Activated CD4-positive, alpha-beta T cell treated with anti-CD3 and anti-CD28 coated beads, Interleukin-2, amount 10 ng/mL, durations not matched to agents 24 days and 14 days (primary cell): ENCODE measurements at regions of chr14 and their contacts with region 1.

Region 1: GRCh38 chr14:65462411-65462810 is 49.9 kb downstream of the FUT8 start:
- DNase-seq: no peak
- H3K4me3 Mint-ChIP-seq: peak overlapping the region; percentile 12
- H3K27ac Mint-ChIP-seq: peak overlapping the region; percentile 68
- H3K4me1 Mint-ChIP-seq: peaks cover 38% of the 10 kb centered on the region
- H3K27me3 Mint-ChIP-seq: no peaks in the 10 kb centered on the region

Region 2: GRCh38 chr14:65444230-65444629 is 18.2 kb before region 1 on chr14:
- intact Hi-C with region 1: loop called (anchors 1 kb)
- DNase-seq: no peak
- H3K4me3 Mint-ChIP-seq: no peak overlapping the region
- H3K27ac Mint-ChIP-seq: peak overlapping the region; percentile 44
- H3K4me1 Mint-ChIP-seq: peaks cover 33% of the 10 kb centered on the region
- H3K27me3 Mint-ChIP-seq: no peaks in the 10 kb centered on the region

Region 3: GRCh38 chr14:65478596-65478995 is 16.2 kb after region 1 on chr14:
- intact Hi-C with region 1: loop called (anchors 2 kb)
- DNase-seq: no peak
- H3K4me3 Mint-ChIP-seq: no peak overlapping the region
- H3K27ac Mint-ChIP-seq: peak overlapping the region; percentile 13
- H3K4me1 Mint-ChIP-seq: peaks cover 53% of the 10 kb centered on the region
- H3K27me3 Mint-ChIP-seq: no peaks in the 10 kb centered on the region

Region 4: DNA sequence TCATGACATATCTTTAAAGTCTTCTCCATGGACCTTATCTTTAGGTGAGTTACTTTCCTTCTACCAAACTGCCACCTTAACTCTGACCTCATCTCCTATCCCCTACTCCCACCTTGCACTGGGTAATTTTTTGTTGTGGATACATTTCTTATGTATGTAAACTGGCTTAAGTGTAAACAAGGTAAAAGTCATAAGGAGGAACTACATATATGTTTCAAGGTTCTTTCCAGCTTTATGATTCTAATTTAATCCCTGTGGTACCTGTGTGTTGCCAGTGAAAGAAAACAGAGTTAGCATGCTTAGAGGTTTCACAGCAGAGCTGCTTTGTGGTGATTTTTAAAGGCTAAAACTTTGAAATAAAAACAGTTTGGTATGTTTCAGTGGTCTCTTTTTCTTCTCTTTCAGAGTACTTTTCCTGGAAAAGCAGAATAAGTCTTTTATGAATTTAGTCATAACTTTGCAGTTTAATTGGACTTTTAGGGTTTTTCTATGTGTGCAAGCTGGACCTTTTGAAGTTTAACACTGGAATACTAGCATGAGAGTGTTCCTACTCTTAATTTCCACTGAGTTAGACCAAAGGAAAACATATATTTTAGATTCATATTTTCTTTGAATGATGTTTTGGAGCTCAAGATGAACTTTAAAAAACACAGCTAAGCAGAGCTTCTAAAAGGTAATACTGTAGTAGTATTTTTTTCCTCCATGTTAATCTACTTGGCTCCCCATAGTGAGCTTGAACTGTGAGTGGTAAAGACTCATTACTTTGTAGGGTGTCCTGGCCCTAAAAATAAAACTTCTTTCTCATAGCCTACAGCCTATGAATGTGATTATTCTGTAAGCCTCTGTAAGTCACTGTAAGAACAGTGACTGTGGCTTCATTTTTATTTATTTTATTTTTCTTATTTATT is 55.5 kb after region 1 on chr14:
- intact Hi-C with region 1: loop called (anchors 5 kb)
- DNase-seq: no peak
- H3K4me3 Mint-ChIP-seq: peak overlapping the region; percentile 0
- H3K27ac Mint-ChIP-seq: peak overlapping the region; percentile 80
- H3K4me1 Mint-ChIP-seq: peaks cover 39% of the 10 kb centered on the region
- H3K27me3 Mint-ChIP-seq: no peaks in the 10 kb centered on the region

Region 5: DNA sequence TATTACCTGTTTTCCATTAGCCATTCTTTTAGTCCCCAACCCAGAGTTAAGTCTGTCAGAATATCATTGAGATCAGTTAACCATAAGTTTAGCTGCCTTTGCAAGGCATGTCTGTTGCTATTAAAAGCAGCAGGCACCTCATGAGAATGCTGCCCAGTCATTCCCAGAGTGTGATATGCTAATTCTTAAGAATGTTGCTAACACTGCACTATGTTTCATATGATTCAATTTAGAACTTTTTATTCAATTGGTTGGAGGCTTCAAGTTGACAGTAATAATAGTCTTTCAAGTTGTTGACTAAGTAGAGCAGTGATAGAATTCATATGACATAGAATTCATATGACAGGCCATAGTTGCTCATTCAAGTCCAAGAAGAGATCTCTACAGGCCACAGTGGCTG is 242.4 kb after region 1 on chr14:
- intact Hi-C with region 1: loop called (anchors 1 kb)
- DNase-seq: no peak
- H3K4me3 Mint-ChIP-seq: no peak overlapping the region
- H3K27ac Mint-ChIP-seq: peak overlapping the region; percentile 82
- H3K4me1 Mint-ChIP-seq: peaks cover 14% of the 10 kb centered on the region
- H3K27me3 Mint-ChIP-seq: no peaks in the 10 kb centered on the region